ENCODE measurements at regions of chr17 and their contacts with region 1.

Region 1: DNA sequence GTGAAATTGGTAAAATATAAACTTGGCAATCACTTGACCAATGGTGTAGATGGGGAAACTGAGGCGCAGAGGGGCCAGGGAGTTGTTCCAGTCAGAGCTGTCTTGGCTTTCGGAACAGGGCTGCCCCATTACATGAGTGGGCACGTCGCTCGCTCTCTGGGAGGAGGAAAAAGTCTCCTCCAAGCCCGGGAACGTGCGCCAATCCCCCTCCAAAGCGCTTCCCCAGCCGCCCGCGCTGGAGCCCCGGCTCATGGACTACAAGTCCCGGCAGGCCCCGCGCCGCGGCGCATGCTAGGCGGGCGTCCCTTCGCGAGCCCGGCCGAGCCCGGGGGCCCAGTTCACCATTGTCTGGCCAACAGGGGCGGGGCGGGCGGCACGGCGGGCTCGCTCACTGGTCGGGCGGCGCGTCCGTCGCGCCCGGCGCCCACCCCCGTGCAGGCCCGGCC is 291 bp upstream of the LLGL1 start:
- DNase-seq: peak; percentile 95
- ATAC-seq: peak; percentile 98
- H3K4me3 ChIP-seq: peak overlapping the region in 4 of 5 experiments; percentile 19 to 45 (median 40)
- H3K4me3 Mint-ChIP-seq: peak overlapping the region; percentile 72
- H3K27ac ChIP-seq: no peak overlapping the region
- H3K27ac Mint-ChIP-seq: no peak overlapping the region
- H3K4me1 ChIP-seq: peaks cover 10 to 16% of the 10 kb centered on the region in 2 donors
- H3K4me1 Mint-ChIP-seq: peaks cover 10% of the 10 kb centered on the region
- H3K27me3 ChIP-seq: no peaks in the 10 kb centered on the region
- H3K27me3 Mint-ChIP-seq: no peaks in the 10 kb centered on the region
- CTCF ChIP-seq: no peak

Region 2: DNA sequence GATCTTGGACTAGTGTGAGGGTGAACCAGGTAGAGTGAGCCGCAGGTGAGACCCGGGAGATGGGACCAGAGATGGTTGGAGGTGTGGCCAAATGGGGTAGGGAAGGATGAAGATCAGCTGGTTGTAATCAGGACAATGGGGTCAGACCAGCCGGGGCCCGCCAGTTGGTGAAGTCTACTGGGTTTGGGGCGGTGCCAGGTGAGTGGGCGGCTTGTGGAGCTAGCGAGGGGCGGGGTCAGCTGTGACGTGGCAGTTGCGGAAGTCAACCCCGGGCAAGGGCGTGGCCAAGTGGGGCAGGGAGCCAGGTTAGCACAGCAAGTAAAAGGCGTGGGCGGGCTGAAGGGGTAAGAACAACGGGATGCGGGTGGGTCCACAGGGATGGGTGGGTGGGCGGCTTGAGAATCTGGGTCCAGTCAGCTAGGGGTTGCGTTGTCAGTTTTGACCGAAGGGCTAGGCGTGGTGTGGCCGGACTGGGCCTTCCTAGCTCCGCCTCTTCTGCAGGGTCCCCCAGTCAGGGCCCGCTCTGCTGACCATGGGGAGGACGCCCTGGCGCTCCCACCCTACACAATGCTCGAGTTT is 67.0 kb before region 1 on chr17:
- CTCF ChIA-PET with region 1: interaction called, 3 read pairs
- POLR2A ChIA-PET with region 1: no interaction called
- intact Hi-C with region 1: loop called (anchors 1 kb)
- DNase-seq: peak; percentile 95
- ATAC-seq: peak; percentile 79
- H3K4me3 ChIP-seq: peak overlapping the region; percentile 9 to 66 (median 55)
- H3K4me3 Mint-ChIP-seq: peak overlapping the region; percentile 93
- H3K27ac ChIP-seq: peak overlapping the region; percentile 58 to 65
- H3K27ac Mint-ChIP-seq: peak overlapping the region; percentile 91
- H3K4me1 ChIP-seq: peaks cover 12 to 27% of the 10 kb centered on the region in 2 donors
- H3K4me1 Mint-ChIP-seq: peaks cover 27% of the 10 kb centered on the region
- H3K27me3 ChIP-seq: no peaks in the 10 kb centered on the region
- H3K27me3 Mint-ChIP-seq: no peaks in the 10 kb centered on the region
- CTCF ChIP-seq: no peak

Region 3: DNA sequence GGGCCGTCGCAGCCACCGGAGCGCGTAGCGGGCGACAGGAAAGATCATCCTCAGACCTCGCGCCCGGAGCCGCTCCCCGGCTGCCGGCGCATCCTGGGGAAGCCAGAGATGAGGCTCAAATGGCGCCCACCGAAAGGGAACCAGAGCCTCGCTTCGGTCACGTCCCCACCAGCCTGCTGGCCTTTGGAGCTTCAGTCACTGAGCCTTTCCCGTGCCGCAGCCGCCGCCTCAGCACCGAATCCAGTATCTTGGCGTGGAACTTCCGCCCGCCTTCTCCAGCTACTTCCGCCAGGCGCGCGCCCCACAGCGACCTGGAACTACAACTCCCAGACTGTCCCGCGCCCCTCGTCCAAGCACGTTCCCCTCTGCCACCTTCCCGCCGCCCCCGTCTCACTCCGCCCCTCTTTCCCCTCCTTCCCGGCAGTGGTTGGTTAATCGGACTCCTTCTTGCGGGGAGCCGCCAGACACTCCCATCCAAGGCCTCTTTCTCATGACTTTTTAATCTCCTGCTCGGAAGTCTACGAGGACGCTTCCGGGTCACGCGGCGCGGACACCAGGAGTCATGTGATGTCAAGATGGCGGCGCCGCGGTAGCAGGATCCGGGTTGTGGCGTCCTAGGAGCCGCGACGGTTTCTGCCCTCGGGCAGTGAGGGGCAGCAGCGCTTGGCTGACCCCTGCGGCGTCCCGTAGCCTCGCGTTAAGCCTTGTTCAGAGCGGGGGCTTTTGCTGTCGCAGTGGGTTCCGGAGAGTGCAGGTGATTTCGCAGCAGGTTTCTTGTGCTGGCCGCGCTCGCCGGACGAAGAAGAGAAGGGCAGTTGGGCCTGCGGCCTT is 89.8 kb after region 1 on chr17 and contains the starts of genes SMCR8 and TOP3A:
- CTCF ChIA-PET with region 1: no interaction called
- POLR2A ChIA-PET with region 1: no interaction called
- intact Hi-C with region 1: loop called (anchors 1 kb)
- DNase-seq: peak; percentile 96
- ATAC-seq: peak; percentile 93
- H3K4me3 ChIP-seq: peak within 1 kb of the TSS; percentile 74 to 98 (median 87)
- H3K4me3 Mint-ChIP-seq: peak within 1 kb of the TSS; percentile 96
- H3K27ac ChIP-seq: peak within 1 kb of the TSS; percentile 91 to 99
- H3K27ac Mint-ChIP-seq: peak within 1 kb of the TSS; percentile 98
- H3K4me1 ChIP-seq: peaks cover 43 to 59% of the 10 kb centered on the region in 2 donors
- H3K4me1 Mint-ChIP-seq: peaks cover 74% of the 10 kb centered on the region
- H3K27me3 ChIP-seq: no peaks in the 10 kb centered on the region
- H3K27me3 Mint-ChIP-seq: no peaks in the 10 kb centered on the region
- CTCF ChIP-seq: no peak
- total RNA-seq, gene SMCR8: 47.3 and 48.0 TPM in 2 replicates
- total RNA-seq, gene TOP3A: 55.8 and 61.7 TPM in 2 replicates

Measured in B cell (primary cell).